Vagina (tissue), 2 donors: ENCODE measurements at regions of chr3 and their contacts with region 1.

Region 1: DNA sequence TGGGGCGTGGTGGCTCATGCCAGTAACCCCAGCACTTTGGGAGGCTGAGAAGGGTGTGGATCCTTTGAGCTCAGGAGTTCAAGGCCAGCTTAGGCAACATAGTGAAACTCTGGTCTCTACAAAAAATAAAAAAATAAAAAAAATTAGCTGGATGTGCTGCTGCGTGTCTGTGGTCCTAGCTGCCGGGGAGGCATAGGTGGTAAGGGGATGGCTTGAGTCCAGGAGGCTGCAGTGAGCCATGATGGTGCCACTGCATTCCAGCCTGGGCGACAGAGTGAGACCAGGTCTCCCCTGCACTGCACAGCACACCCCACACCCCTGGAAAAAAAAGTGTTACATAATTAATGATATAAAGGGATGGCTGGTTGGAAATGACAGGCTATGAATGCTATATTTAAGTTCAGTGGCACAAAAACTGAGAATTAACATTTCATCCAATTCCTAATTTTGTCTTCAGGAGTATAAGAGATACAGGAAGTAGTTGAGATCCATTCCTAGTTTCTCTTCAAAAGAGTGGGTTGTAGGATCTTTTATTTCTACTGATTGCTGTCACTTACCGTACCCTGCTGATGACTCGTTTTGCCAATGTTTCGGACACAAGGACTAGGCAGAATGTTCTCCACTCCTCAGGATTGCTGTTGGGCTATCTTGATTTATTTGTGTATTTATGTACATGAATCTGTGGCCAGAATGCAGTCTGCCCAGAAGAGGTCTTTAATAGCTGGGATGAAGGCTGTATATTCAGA is 11.7 kb downstream of the ARL8B start:
- DNase-seq: no peak
- H3K4me3 ChIP-seq: no peak overlapping the region
- H3K27ac ChIP-seq: no peak overlapping the region
- H3K4me1 ChIP-seq: peaks cover 76% of the 10 kb centered on the region
- H3K27me3 ChIP-seq: no peaks in the 10 kb centered on the region
- CTCF ChIP-seq: no peak
- POLR2A ChIP-seq: no peak

Region 2: GRCh38 chr3:4963669-4964589 is 169.9 kb before region 1 on chr3:
- intact Hi-C with region 1: no loop called
- DNase-seq: no peak
- H3K4me3 ChIP-seq: no peak overlapping the region
- H3K27ac ChIP-seq: no peak overlapping the region
- H3K4me1 ChIP-seq: peaks cover 5% of the 10 kb centered on the region
- H3K27me3 ChIP-seq: no peaks in the 10 kb centered on the region
- CTCF ChIP-seq: no peak
- POLR2A ChIP-seq: no peak

Region 3: DNA sequence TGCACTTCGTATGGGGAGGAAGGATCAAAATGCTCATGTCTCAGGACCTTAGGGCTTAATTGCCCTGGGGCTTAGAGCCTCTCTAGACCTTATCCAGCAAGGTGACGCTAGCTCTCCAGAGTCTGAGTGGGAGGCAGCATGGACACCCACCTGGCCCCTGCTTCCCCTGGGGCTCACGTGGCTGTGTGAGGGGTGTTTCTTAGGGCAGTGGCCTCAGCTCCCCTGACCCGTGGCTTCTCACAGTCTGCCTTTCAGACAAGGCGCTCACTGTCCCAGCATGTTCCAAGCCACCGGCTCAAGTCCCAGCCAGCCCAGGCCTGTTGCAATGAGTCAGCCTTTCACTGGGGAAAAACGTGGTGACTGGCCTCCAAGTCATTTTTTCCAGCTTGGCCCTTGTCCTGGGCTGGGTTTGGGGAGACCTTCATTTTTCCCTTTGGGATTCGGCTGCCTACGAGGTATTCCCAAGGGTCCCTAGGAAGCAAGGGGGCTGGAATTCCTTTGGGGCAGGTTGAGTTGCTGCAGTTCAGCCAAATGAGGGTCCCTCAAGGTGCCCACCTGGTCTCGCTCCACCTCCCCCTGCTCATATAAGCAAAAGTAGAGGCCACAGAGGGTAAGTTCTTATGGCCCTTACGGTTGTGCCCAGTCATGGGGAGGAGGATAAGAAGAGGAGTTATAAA is 138.9 kb before region 1 on chr3:
- intact Hi-C with region 1: loop called (anchors 5 kb)
- DNase-seq: peak; percentile 89
- H3K4me3 ChIP-seq: no peak overlapping the region
- H3K27ac ChIP-seq: peak overlapping the region; percentile 62
- H3K4me1 ChIP-seq: peaks cover 22% of the 10 kb centered on the region
- H3K27me3 ChIP-seq: no peaks in the 10 kb centered on the region
- CTCF ChIP-seq: no peak
- POLR2A ChIP-seq: no peak

Region 4: GRCh38 chr3:5016218-5017161 is 117.3 kb before region 1 on chr3:
- intact Hi-C with region 1: no loop called
- DNase-seq: no peak
- H3K4me3 ChIP-seq: no peak overlapping the region
- H3K27ac ChIP-seq: peak overlapping the region; percentile 78
- H3K4me1 ChIP-seq: peaks cover 61% of the 10 kb centered on the region
- H3K27me3 ChIP-seq: no peaks in the 10 kb centered on the region
- CTCF ChIP-seq: no peak
- POLR2A ChIP-seq: no peak